PC-9 (cell line): ENCODE measurements at regions of chr19 and their contacts with region 1.

Region 1: GRCh38 chr19:17385878-17386611 is 8.0 kb downstream of the CCDC194 start:
- DNase-seq: peak in 1 of 2 experiments; percentile 55
- H3K4me3 ChIP-seq: no peak overlapping the region
- H3K27ac ChIP-seq: no peak overlapping the region
- H3K4me1 ChIP-seq: peaks cover 9% of the 10 kb centered on the region
- H3K27me3 ChIP-seq: no peaks in the 10 kb centered on the region
- CTCF ChIP-seq: peak; percentile 97

Region 2: GRCh38 chr19:17346109-17346671 is 39.9 kb before region 1 on chr19:
- CTCF ChIA-PET with region 1: interaction called, 3 read pairs
- POLR2A ChIA-PET with region 1: no interaction called
- intact Hi-C with region 1: loop called (anchors 1 kb)
- DNase-seq: peak in 1 of 2 experiments; percentile 79
- H3K4me3 ChIP-seq: no peak overlapping the region
- H3K27ac ChIP-seq: no peak overlapping the region
- H3K4me1 ChIP-seq: peaks cover 10% of the 10 kb centered on the region
- H3K27me3 ChIP-seq: no peaks in the 10 kb centered on the region
- CTCF ChIP-seq: peak; percentile 94

Region 3: GRCh38 chr19:17543986-17544385 is 157.9 kb after region 1 on chr19:
- CTCF ChIA-PET with region 1: interaction called, 11 read pairs
- POLR2A ChIA-PET with region 1: no interaction called
- intact Hi-C with region 1: no loop called
- DNase-seq: no peak
- H3K4me3 ChIP-seq: no peak overlapping the region
- H3K27ac ChIP-seq: no peak overlapping the region
- H3K4me1 ChIP-seq: 0 out of 2 replicates have a peak, but pooled peaks cover 5% of the 10 kb centered on the region
- H3K27me3 ChIP-seq: no peaks in the 10 kb centered on the region
- CTCF ChIP-seq: no peak

Region 4: GRCh38 chr19:17610384-17610783 is 224.3 kb after region 1 on chr19:
- CTCF ChIA-PET with region 1: no interaction called
- POLR2A ChIA-PET with region 1: no interaction called
- intact Hi-C with region 1: no loop called
- DNase-seq: peak in 1 of 2 experiments; percentile 47
- H3K4me3 ChIP-seq: no peak overlapping the region
- H3K27ac ChIP-seq: no peak overlapping the region
- H3K4me1 ChIP-seq: no peaks in the 10 kb centered on the region
- H3K27me3 ChIP-seq: no peaks in the 10 kb centered on the region
- CTCF ChIP-seq: no peak